ENCODE measurements at regions of chr9 and their contacts with region 1.

Region 1: GRCh38 chr9:2545881-2546490 is 75.6 kb upstream of the VLDLR start:
- DNase-seq: no peak
- H3K4me3 ChIP-seq: no peak overlapping the region
- H3K27ac ChIP-seq: no peak overlapping the region
- H3K4me1 ChIP-seq: no peaks in the 10 kb centered on the region
- H3K27me3 ChIP-seq: no peaks in the 10 kb centered on the region
- CTCF ChIP-seq: no peak
- EP300 ChIP-seq: no peak
- POLR2A ChIP-seq: no peak

Region 2: GRCh38 chr9:2524601-2525000 is 21.4 kb before region 1 on chr9:
- intact Hi-C with region 1: loop called (anchors 2 kb)
- DNase-seq: no peak
- H3K4me3 ChIP-seq: no peak overlapping the region
- H3K27ac ChIP-seq: no peak overlapping the region
- H3K4me1 ChIP-seq: no peaks in the 10 kb centered on the region
- H3K27me3 ChIP-seq: no peaks in the 10 kb centered on the region
- CTCF ChIP-seq: no peak
- EP300 ChIP-seq: no peak
- POLR2A ChIP-seq: no peak